ENCODE measurements at regions of chrX and their contacts with region 1.

Region 1: DNA sequence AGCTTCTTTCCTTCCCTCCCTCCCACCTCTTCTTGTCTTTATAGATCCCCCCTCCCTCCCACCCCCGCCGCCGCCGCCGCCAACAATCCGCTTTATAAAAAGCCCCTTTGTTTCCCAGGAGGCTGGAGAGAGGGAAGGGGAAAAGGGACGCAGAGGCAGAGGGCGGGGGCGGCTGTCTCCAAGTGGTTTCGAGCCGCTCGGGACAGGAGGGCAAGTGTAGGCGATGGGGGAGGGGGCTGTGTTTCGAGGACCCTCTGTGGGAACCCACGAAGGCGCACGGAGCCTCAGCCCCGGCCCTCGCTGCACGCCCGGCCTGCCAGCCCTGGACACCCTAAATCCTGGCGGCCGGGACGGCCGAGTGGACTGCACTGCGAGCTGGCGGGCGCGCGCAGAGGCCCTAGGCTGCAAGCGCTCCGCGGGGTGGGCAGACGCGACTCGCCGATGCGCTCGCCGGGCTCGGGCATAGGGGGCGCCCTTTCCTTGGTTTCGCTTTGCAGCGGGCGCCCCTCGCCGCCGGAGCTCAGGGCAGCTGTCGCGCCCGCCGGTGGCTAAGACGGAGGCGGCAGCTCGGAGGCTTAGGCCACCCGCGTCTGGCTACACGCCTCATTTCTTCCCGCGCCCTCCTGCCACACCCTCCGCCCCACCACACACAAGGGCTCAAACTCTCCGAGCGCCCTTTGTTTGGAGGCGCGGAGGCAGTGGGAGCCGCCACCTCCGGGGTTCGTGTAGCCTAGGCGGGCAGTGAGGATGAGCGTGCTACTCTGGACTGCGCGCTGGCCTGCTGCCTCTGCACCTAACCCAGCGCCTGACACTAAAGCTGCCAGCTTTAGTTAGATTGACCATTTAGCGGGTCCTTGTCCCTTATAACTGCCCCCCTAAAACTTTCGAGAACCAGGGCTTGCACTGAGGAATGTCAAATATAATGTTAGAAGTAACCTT is 2.2 kb downstream of the MAMLD1 start:
- DNase-seq: peak in 8 of 9 experiments; percentile 37 to 76 (median 66)
- ATAC-seq: peak; percentile 18
- H3K4me3 ChIP-seq: peak overlapping the region; percentile 43 to 59
- H3K4me3 Mint-ChIP-seq: peak overlapping the region; percentile 86
- H3K27ac ChIP-seq: no peak overlapping the region
- H3K27ac Mint-ChIP-seq: no peak overlapping the region
- H3K4me1 ChIP-seq: peaks cover 21% of the 10 kb centered on the region
- H3K4me1 Mint-ChIP-seq: peaks cover 23% of the 10 kb centered on the region
- H3K27me3 ChIP-seq: peaks cover 0 to 4% of the 10 kb centered on the region in 2 experiments
- H3K27me3 Mint-ChIP-seq: peaks cover 7% of the 10 kb centered on the region
- CTCF ChIP-seq: peak; percentile 15

Region 2: DNA sequence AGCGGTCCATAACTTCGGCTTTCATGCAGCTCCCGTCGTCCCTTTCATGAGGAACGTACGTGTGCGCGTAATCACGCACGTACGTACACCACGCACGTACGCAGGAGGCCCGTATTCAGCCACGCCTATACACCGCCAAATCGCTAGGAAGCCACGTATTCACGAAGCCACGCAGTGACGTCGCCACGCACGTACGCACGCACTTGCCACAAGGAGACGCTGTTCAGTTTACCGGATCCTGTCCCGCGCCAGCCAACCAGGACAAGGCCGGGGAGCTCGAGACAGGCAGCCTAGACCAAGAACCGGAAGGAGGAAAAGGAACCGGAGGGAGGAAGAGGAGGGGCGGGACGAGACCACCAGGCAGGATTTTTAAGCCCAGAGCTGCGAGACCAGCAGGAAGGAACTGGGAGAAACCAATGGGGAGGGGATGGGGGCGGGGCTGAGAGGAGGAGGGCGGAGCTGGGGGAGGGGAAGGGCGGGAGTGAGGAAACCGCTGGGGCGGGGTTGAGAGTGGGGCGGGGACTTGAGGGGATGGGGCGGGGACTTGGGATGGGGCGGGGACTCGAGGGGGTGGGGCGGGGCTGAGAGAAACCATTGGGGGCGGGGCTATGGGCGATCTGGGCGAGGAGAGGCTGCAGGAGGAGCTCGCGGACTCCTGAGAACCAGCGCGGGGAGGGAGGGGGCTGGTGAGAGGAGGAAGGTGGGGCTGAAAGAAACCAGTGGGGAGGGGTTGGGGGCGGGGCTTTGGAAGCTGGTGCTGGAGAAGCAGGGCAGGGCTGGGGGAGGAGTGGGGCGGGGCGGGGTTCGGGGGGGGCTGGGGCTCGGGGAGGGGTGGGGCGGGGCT is 426.7 kb before region 1 on chrX and contains the start of gene EOLA2:
- CTCF ChIA-PET with region 1: interaction called, 3 read pairs
- POLR2A ChIA-PET with region 1: no interaction called
- intact Hi-C with region 1: loop called in 1 of 2 experiments (anchors 5 kb)
- DNase-seq: peak; percentile 83 to 98 (median 91)
- ATAC-seq: peak; percentile 52
- H3K4me3 ChIP-seq: peak within 1 kb of the TSS; percentile 69 to 89
- H3K4me3 Mint-ChIP-seq: peak within 1 kb of the TSS; percentile 94
- H3K27ac ChIP-seq: peak within 1 kb of the TSS; percentile 92 to 99
- H3K27ac Mint-ChIP-seq: peak within 1 kb of the TSS; percentile 98
- H3K4me1 ChIP-seq: peaks cover 7% of the 10 kb centered on the region
- H3K4me1 Mint-ChIP-seq: peaks cover 3% of the 10 kb centered on the region
- H3K27me3 ChIP-seq: no peaks in the 10 kb centered on the region
- H3K27me3 Mint-ChIP-seq: no peaks in the 10 kb centered on the region
- CTCF ChIP-seq: no peak
- total RNA-seq, gene EOLA2: 43.7 to 44.4 TPM

Region 3: DNA sequence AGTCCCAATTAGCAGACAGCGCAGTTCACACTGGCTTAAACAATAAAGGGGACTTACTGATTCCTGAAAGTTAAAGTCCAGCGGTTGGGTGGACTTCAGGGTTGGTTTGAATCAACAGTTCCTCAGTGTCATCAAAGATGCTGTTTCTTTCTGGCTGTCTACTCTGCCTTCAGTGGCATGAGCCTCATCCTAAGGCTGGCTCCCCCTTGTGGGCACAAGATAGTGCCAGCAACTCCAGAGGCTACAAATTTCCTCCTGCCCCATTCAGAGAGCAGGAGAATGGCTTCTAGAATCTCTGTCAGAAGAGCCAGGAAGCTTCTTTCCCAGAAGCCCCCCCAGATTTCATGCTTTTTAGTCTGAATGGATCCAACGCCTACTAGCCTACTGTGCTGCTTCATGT is 120.7 kb after region 1 on chrX:
- CTCF ChIA-PET with region 1: interaction called, 4 read pairs
- POLR2A ChIA-PET with region 1: no interaction called
- intact Hi-C with region 1: loop called in 1 of 2 experiments (anchors 10 kb)
- DNase-seq: peak in 8 of 9 experiments; percentile 14 to 63 (median 37)
- ATAC-seq: no peak
- H3K4me3 ChIP-seq: no peak overlapping the region
- H3K4me3 Mint-ChIP-seq: no peak overlapping the region
- H3K27ac ChIP-seq: no peak overlapping the region
- H3K27ac Mint-ChIP-seq: no peak overlapping the region
- H3K4me1 ChIP-seq: no peaks in the 10 kb centered on the region
- H3K4me1 Mint-ChIP-seq: no peaks in the 10 kb centered on the region
- H3K27me3 ChIP-seq: no peaks in the 10 kb centered on the region
- H3K27me3 Mint-ChIP-seq: no peaks in the 10 kb centered on the region
- CTCF ChIP-seq: no peak

Region 4: DNA sequence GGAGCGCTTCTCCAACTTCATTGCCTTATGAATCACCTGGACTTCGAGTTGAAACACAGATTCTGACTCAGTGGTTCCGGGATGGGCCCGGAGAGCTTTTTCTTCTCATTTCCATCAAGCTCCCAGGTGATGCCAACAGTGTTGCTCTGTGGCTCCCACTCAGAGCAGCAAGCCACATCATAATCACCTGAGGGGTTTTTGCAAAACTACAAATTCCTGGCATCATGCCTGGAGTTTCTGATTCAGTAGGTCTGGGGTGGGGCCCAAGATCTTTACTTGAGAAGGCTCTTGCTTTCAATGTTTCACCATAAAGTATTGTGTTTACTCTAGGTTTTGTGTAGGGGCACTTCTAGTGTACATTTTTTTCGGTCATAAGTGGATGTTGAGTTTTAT is 210.1 kb after region 1 on chrX:
- CTCF ChIA-PET with region 1: no interaction called
- POLR2A ChIA-PET with region 1: interaction called, 4 read pairs
- intact Hi-C with region 1: loop called (anchors 5 kb)
- DNase-seq: peak in 7 of 9 experiments; percentile 15 to 78 (median 56)
- ATAC-seq: peak; percentile 81
- H3K4me3 ChIP-seq: peak overlapping the region in 1 of 2 experiments; percentile 33
- H3K4me3 Mint-ChIP-seq: peak overlapping the region; percentile 74
- H3K27ac ChIP-seq: peak overlapping the region in 1 of 2 experiments; percentile 31
- H3K27ac Mint-ChIP-seq: peak overlapping the region; percentile 88
- H3K4me1 ChIP-seq: peaks cover 71% of the 10 kb centered on the region
- H3K4me1 Mint-ChIP-seq: peaks cover 81% of the 10 kb centered on the region
- H3K27me3 ChIP-seq: no peaks in the 10 kb centered on the region
- H3K27me3 Mint-ChIP-seq: no peaks in the 10 kb centered on the region
- CTCF ChIP-seq: no peak

Region 5: DNA sequence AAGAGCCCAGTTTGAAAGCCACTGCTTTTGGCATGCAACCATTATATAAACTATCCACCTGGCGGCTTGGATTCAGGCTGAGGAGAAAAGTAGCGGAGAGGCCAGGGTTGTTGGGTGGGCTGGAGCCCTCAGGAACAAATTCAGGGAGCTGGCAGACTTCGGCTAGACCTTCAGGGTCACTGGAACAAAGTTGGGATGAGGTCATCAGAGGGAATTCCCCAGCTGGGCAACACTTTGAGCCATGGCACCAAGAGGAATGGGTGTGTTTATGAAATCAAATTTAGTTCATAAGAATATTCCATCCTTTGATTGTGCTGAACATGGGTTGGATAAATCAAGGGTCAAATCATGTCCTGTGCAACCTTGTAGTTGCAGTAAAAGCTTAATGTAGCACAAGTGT is 349.9 kb after region 1 on chrX:
- CTCF ChIA-PET with region 1: interaction called, 3 read pairs
- POLR2A ChIA-PET with region 1: no interaction called
- intact Hi-C with region 1: loop called in 1 of 2 experiments (anchors 10 kb)
- DNase-seq: no peak
- ATAC-seq: no peak
- H3K4me3 ChIP-seq: no peak overlapping the region
- H3K4me3 Mint-ChIP-seq: no peak overlapping the region
- H3K27ac ChIP-seq: no peak overlapping the region
- H3K27ac Mint-ChIP-seq: peak overlapping the region; percentile 49
- H3K4me1 ChIP-seq: no peaks in the 10 kb centered on the region
- H3K4me1 Mint-ChIP-seq: peaks cover 50% of the 10 kb centered on the region
- H3K27me3 ChIP-seq: no peaks in the 10 kb centered on the region
- H3K27me3 Mint-ChIP-seq: no peaks in the 10 kb centered on the region
- CTCF ChIP-seq: no peak

Region 6: GRCh38 chrX:150898343-150899190 is 533.2 kb after region 1 on chrX and contains the start of gene CD99L2:
- CTCF ChIA-PET with region 1: no interaction called
- POLR2A ChIA-PET with region 1: no interaction called
- intact Hi-C with region 1: loop called in 1 of 2 experiments (anchors 10 kb)
- DNase-seq: peak; percentile 83 to 93 (median 89)
- ATAC-seq: peak; percentile 92
- H3K4me3 ChIP-seq: peak within 1 kb of the TSS; percentile 76 to 77
- H3K4me3 Mint-ChIP-seq: peak within 1 kb of the TSS; percentile 91
- H3K27ac ChIP-seq: peak within 1 kb of the TSS; percentile 36 to 63
- H3K27ac Mint-ChIP-seq: peak within 1 kb of the TSS; percentile 67
- H3K4me1 ChIP-seq: peaks cover 6% of the 10 kb centered on the region
- H3K4me1 Mint-ChIP-seq: peaks cover 11% of the 10 kb centered on the region
- H3K27me3 ChIP-seq: no peaks in the 10 kb centered on the region
- H3K27me3 Mint-ChIP-seq: no peaks in the 10 kb centered on the region
- CTCF ChIP-seq: no peak
- total RNA-seq, gene CD99L2: 6.4 TPM

Region 7: GRCh38 chrX:150975655-150976390 is 610.5 kb after region 1 on chrX:
- CTCF ChIA-PET with region 1: no interaction called
- POLR2A ChIA-PET with region 1: no interaction called
- intact Hi-C with region 1: no loop called
- DNase-seq: no peak
- ATAC-seq: no peak
- H3K4me3 ChIP-seq: no peak overlapping the region
- H3K4me3 Mint-ChIP-seq: no peak overlapping the region
- H3K27ac ChIP-seq: no peak overlapping the region
- H3K27ac Mint-ChIP-seq: no peak overlapping the region
- H3K4me1 ChIP-seq: no peaks in the 10 kb centered on the region
- H3K4me1 Mint-ChIP-seq: no peaks in the 10 kb centered on the region
- H3K27me3 ChIP-seq: no peaks in the 10 kb centered on the region
- H3K27me3 Mint-ChIP-seq: peaks cover 3% of the 10 kb centered on the region
- CTCF ChIP-seq: no peak

Region 8: GRCh38 chrX:151543706-151544105 is 1178.4 kb after region 1 on chrX:
- CTCF ChIA-PET with region 1: no interaction called
- POLR2A ChIA-PET with region 1: no interaction called
- intact Hi-C with region 1: no loop called
- DNase-seq: no peak
- ATAC-seq: no peak
- H3K4me3 ChIP-seq: no peak overlapping the region
- H3K4me3 Mint-ChIP-seq: no peak overlapping the region
- H3K27ac ChIP-seq: no peak overlapping the region
- H3K27ac Mint-ChIP-seq: no peak overlapping the region
- H3K4me1 ChIP-seq: no peaks in the 10 kb centered on the region
- H3K4me1 Mint-ChIP-seq: no peaks in the 10 kb centered on the region
- H3K27me3 ChIP-seq: no peaks in the 10 kb centered on the region
- H3K27me3 Mint-ChIP-seq: no peaks in the 10 kb centered on the region
- CTCF ChIP-seq: no peak

Measured in CD8-positive, alpha-beta T cell (primary cell).